ENCODE measurements at regions of chr6 and their contacts with region 1.

Region 1: DNA sequence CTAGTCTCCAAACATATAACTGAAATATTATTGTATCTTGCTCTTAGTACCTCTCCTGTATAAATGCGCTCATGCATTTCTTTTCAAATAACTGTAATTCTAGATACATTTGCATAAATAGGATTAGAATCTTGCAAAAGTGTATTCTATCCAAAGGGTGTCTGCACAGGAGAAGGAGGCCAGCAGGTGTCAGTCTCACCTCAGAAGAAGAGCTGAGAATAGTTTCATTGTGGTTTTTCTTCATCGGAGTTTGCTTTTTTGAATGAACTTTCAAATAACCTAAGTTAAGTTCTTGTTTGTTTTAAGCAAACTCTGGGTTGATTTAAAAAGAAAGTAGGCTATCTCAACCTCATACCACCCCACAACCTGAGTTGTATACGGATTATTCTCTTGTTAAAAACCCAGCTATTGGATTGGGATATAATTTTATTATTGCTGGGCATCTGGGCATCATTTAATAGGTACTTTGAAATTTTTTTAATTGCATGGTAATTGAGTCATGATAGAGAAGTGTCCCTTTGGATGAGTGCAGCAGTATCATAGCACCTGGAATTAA is 125.0 kb upstream of the MLIP start:
- DNase-seq: peak in 1 of 2 donors; percentile 47
- ATAC-seq: peak; percentile 29 to 88 (median 77)
- H3K4me3 ChIP-seq: peak overlapping the region in 1 of 10 donors; percentile 16
- H3K27ac ChIP-seq: peak overlapping the region in 4 of 10 donors; percentile 34 to 66 (median 56)
- H3K4me1 ChIP-seq: peaks cover 0 to 46% (median 28%) of the 10 kb centered on the region in 9 donors
- H3K27me3 ChIP-seq: no peaks in the 10 kb centered on the region
- CTCF ChIP-seq: peak; percentile 32 to 86 (median 71)

Region 2: DNA sequence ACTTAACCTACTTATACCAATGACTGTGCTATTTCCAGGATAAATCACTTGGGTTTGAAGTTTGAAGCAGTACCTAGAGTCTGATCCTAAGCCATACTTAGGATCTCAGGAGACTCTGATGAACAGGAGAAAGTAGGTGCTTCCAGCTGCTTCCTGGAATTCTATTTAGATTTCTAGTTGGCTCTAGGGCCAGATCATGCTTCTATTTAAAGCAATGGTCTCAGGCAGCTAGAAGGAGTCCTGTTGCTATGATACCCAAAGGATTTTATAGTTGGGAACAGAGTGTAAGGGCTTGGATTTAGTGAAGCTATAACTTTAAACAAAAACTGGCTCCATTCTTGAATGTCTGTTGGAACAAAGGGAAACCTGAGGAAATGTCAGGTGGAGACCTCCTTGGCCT is 269.6 kb after region 1 on chr6:
- intact Hi-C with region 1: loop called in 5 of 10 experiments (anchors 10 kb)
- DNase-seq: peak in 1 of 2 donors; percentile 21
- ATAC-seq: peak; percentile 81 to 98 (median 94)
- H3K4me3 ChIP-seq: no peak overlapping the region
- H3K27ac ChIP-seq: peak overlapping the region in 9 of 10 donors; percentile 22 to 82 (median 79)
- H3K4me1 ChIP-seq: peaks cover 0 to 43% (median 14%) of the 10 kb centered on the region in 9 donors
- H3K27me3 ChIP-seq: no peaks in the 10 kb centered on the region
- CTCF ChIP-seq: no peak

Region 3: DNA sequence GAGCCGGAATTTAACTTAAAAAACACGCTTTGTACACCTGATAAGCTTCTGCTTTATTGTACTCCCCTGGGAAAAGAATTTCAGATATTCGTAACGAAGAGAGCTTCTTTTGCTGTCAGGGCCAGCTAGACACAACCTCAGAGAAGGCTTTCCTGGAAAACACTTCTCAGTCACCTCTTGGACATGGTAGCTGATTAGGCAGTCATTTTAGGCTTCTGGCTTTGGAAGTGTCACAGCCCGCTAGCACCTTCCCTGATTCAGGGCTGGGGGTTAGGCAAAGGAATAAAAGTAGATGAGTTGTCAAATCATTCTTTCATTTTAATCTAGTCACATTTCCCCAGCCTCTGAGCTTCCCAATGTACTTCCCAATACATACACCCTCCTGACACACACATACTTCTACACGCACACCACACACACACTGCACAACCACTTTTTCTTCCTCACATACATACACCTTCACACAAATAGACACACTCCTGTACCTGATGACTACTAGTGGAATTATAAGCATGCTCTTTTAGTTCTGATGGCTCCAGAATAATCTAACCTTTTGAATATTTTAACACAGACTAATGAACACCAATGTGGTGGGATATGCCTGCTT is 287.1 kb after region 1 on chr6:
- intact Hi-C with region 1: loop called in 7 of 10 experiments (anchors 5 to 10 kb)
- DNase-seq: no peak
- ATAC-seq: peak in 3 of 8 donors; percentile 25 to 65 (median 53)
- H3K4me3 ChIP-seq: no peak overlapping the region
- H3K27ac ChIP-seq: no peak overlapping the region
- H3K4me1 ChIP-seq: no peaks in the 10 kb centered on the region
- H3K27me3 ChIP-seq: no peaks in the 10 kb centered on the region
- CTCF ChIP-seq: no peak

Region 4: GRCh38 chr6:54717849-54718455 is 731.7 kb after region 1 on chr6:
- intact Hi-C with region 1: loop called in 2 of 10 experiments (anchors 10 kb)
- DNase-seq: peak in 1 of 2 donors; percentile 52
- ATAC-seq: peak in 3 of 8 donors; percentile 42 to 56 (median 53)
- H3K4me3 ChIP-seq: no peak overlapping the region
- H3K27ac ChIP-seq: no peak overlapping the region
- H3K4me1 ChIP-seq: no peaks in the 10 kb centered on the region
- H3K27me3 ChIP-seq: no peaks in the 10 kb centered on the region
- CTCF ChIP-seq: peak; percentile 58 to 87 (median 77)

Region 5: GRCh38 chr6:55239099-55239498 is 1252.9 kb after region 1 on chr6:
- intact Hi-C with region 1: loop called in 4 of 10 experiments (anchors 5 to 10 kb)
- DNase-seq: peak in 1 of 2 donors; percentile 9
- ATAC-seq: no peak
- H3K4me3 ChIP-seq: no peak overlapping the region
- H3K27ac ChIP-seq: no peak overlapping the region
- H3K4me1 ChIP-seq: peaks cover 0 to 7% (median 0%) of the 10 kb centered on the region in 9 donors
- H3K27me3 ChIP-seq: no peaks in the 10 kb centered on the region
- CTCF ChIP-seq: no peak